Breast epithelium (tissue), 4 donors: ENCODE measurements at regions of chr3 and their contacts with region 1.

Region 1: DNA sequence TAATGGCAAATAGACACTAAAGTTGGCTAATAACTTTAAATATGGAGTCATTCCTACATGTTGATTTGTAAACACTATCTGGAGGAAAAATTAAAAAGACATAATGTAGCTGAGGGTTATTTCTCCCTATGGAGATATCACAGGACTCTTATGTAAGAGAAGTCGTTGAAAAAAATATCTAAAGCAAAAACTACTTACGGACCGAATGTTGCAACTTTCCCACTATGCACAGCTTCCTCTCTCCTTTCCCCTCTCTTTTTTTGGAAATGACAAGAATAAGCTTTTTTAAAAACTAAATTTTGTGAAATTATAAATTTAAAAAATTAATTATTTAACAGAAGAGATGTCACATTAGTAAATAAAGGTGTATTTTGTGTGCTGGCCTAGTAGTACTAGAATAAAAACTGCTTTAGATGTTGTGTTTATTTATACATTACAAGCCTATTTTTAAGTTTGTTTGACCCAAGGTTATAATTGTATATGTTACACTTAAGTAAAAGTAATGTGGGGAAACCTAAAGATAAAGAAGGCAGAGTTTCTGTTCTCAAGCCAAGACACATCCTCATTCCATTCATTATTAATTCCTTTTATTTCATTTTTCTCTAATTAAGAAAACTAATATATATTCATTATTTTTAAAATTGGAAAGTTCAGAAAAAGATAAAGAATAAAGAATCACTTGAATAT is 20.7 kb upstream of the PPARG start:
- DNase-seq: no peak
- H3K4me3 ChIP-seq: no peak overlapping the region
- H3K27ac ChIP-seq: no peak overlapping the region
- H3K4me1 ChIP-seq: no peaks in the 10 kb centered on the region
- H3K27me3 ChIP-seq: no peaks in the 10 kb centered on the region
- CTCF ChIP-seq: no peak
- POLR2A ChIP-seq: no peak

Region 2: DNA sequence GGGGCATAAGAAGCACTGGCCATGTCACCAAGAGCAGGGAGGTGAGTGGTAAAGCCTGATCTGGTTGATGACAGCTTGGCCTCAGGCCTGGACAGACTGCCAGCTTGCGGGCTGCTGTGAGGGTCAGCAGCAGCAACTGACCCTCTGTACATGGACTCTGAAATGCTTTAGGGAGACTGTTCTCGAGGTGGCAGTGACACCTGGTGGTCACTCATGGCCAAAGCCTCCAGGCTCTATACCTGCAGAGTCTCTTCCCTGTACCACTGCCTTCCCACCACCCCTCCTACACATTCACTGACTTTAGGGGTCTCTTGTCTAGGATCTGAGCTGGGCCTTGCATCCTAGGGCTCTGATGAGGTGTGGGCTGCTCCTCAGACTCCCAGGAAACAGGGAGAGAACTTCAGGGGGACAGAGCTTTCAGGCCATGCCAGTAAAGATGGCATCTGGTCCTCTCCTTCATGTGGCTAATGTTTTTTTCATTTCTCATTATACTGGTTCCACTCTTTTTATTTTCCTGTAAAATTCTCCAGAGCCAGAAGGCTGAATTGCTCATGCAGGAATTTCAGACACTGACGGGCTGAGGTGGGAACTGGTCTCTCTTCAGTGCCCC is 92.2 kb before region 1 on chr3:
- intact Hi-C with region 1: no loop called
- DNase-seq: peak in 1 of 2 donors; percentile 45
- H3K4me3 ChIP-seq: no peak overlapping the region
- H3K27ac ChIP-seq: no peak overlapping the region
- H3K4me1 ChIP-seq: no peaks in the 10 kb centered on the region
- H3K27me3 ChIP-seq: no peaks in the 10 kb centered on the region
- CTCF ChIP-seq: peak; percentile 51 to 80 (median 75)
- POLR2A ChIP-seq: no peak

Region 3: GRCh38 chr3:12423918-12424630 is 155.9 kb after region 1 on chr3:
- intact Hi-C with region 1: loop called (anchors 10 kb)
- DNase-seq: no peak
- H3K4me3 ChIP-seq: no peak overlapping the region
- H3K27ac ChIP-seq: no peak overlapping the region
- H3K4me1 ChIP-seq: peaks cover 0 to 6% of the 10 kb centered on the region in 2 donors
- H3K27me3 ChIP-seq: no peaks in the 10 kb centered on the region
- CTCF ChIP-seq: no peak
- POLR2A ChIP-seq: no peak